K562 (cell line): ENCODE measurements at regions of chr18 and their contacts with region 1.

Region 1: GRCh38 chr18:58128381-58129374 is 84.7 kb downstream of the NEDD4L start:
- DNase-seq: no peak
- ATAC-seq: no peak
- H3K4me3 ChIP-seq: no peak overlapping the region
- H3K27ac ChIP-seq: no peak overlapping the region
- H3K4me1 ChIP-seq: no peaks in the 10 kb centered on the region
- H3K27me3 ChIP-seq: no peaks in the 10 kb centered on the region
- CTCF ChIP-seq: no peak
- EP300 ChIP-seq: no peak
- POLR2A ChIP-seq: no peak
- RAD21 ChIP-seq: no peak

Region 2: DNA sequence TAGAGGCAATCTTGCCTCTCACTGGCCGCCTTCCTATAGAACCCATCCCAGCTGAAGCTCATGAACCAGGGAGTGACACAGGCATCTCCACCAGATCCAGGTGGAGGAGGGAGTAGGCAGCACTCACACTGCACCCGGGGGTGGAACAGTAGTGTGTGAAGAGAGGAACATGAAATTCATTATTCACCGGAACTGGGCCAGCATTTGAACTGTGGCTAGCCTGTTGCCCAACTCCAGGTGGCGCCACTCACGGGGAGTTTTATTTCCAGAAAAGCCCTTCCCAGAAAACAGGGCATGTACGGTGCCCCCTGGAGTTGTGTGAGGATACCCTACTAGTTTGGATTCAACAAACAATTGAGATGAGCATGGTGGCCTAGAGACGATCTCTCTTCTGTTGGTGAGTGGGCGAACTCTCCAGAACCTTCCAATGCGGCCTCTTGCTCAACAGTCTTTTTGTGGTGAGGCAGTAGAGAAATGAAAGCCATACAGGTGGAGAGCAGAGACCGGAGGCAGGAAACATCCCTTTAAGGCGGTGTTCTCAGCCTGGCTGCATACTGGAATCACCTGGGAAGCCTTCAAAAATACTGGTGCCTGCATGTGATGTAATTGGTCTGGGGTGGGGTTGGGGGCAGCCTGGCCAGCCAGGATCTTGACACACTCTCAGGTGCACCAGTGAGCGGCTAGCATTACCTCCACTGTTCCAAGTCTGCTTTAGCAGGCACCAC is 158.2 kb before region 1 on chr18:
- CTCF ChIA-PET with region 1: no interaction called
- POLR2A ChIA-PET with region 1: interaction called, 4 read pairs
- in situ Hi-C with region 1: no loop called
- intact Hi-C with region 1: loop called (anchors 5 kb)
- DNase-seq: peak; percentile 13 to 30 (median 18)
- ATAC-seq: peak; percentile 85
- H3K4me3 ChIP-seq: no peak overlapping the region
- H3K27ac ChIP-seq: no peak overlapping the region
- H3K4me1 ChIP-seq: no peaks in the 10 kb centered on the region; a peak in 1 of 5 replicates
- H3K27me3 ChIP-seq: no peaks in the 10 kb centered on the region
- CTCF ChIP-seq: peak; percentile 68 to 80 (median 74)
- EP300 ChIP-seq: no peak
- POLR2A ChIP-seq: no peak
- RAD21 ChIP-seq: peak; percentile 33 to 56; a peak in 2 of 4 replicates

Region 3: GRCh38 chr18:58080451-58080850 is 48.2 kb before region 1 on chr18:
- CTCF ChIA-PET with region 1: no interaction called
- POLR2A ChIA-PET with region 1: no interaction called
- in situ Hi-C with region 1: no loop called
- intact Hi-C with region 1: no loop called
- DNase-seq: no peak
- ATAC-seq: no peak; the same call in 2 of the 3 replicates
- H3K4me3 ChIP-seq: no peak overlapping the region
- H3K27ac ChIP-seq: no peak overlapping the region
- H3K4me1 ChIP-seq: peaks cover 10 to 21% of the 10 kb centered on the region in 2 experiments; a peak in 3 of 5 replicates
- H3K27me3 ChIP-seq: no peaks in the 10 kb centered on the region
- CTCF ChIP-seq: no peak
- EP300 ChIP-seq: no peak
- POLR2A ChIP-seq: no peak
- RAD21 ChIP-seq: no peak